ENCODE measurements at regions of chr3 and their contacts with region 1.

Region 1: GRCh38 chr3:126134219-126134975 is 46.0 kb downstream of the ALDH1L1 start:
- DNase-seq: peak; percentile 28 to 32
- ATAC-seq: peak; percentile 82 to 92; a peak in 5 of 6 replicates
- H3K4me3 ChIP-seq: no peak overlapping the region
- H3K27ac ChIP-seq: no peak overlapping the region
- H3K4me1 ChIP-seq: no peaks in the 10 kb centered on the region
- CTCF ChIP-seq: peak; percentile 66
- EP300 ChIP-seq: no peak
- POLR2A ChIP-seq: no peak
- RAD21 ChIP-seq: peak; percentile 84 to 86

Region 2: DNA sequence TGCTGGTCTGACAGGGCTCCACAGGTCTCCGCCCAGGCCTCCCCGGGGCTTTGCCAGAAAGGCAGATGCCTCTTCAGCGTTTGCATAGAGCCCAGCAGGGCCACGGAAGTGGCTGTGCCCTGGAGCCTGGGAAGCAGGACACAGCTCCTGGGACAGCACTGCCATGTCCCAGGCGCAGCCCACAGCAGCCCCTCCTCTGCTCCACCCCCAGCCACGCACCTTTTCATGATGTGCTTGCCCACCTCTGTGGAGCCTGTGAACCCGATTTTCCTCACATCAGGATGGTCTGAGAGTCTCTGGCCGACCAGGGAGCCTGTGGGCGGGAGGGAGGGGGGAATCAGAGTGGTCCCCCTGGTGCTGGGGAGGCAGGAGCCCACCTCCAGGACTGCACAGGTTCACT is 16.6 kb before region 1 on chr3:
- CTCF ChIA-PET with region 1: interaction called, 60 read pairs
- POLR2A ChIA-PET with region 1: no interaction called
- DNase-seq: no peak
- ATAC-seq: no peak
- H3K4me3 ChIP-seq: no peak overlapping the region
- H3K27ac ChIP-seq: no peak overlapping the region
- H3K4me1 ChIP-seq: no peaks in the 10 kb centered on the region
- CTCF ChIP-seq: no peak
- EP300 ChIP-seq: no peak
- POLR2A ChIP-seq: no peak
- RAD21 ChIP-seq: no peak

Region 3: GRCh38 chr3:126146525-126147146 is 12.2 kb after region 1 on chr3:
- CTCF ChIA-PET with region 1: interaction called, 23 read pairs
- POLR2A ChIA-PET with region 1: no interaction called
- DNase-seq: no peak
- ATAC-seq: no peak
- H3K4me3 ChIP-seq: no peak overlapping the region
- H3K27ac ChIP-seq: no peak overlapping the region
- H3K4me1 ChIP-seq: no peaks in the 10 kb centered on the region
- CTCF ChIP-seq: no peak
- EP300 ChIP-seq: no peak
- POLR2A ChIP-seq: no peak
- RAD21 ChIP-seq: no peak

Region 4: GRCh38 chr3:126212602-126213378 is 78.4 kb after region 1 on chr3:
- CTCF ChIA-PET with region 1: interaction called, 11 read pairs
- POLR2A ChIA-PET with region 1: interaction called, 3 read pairs
- DNase-seq: peak; percentile 21 to 51
- ATAC-seq: peak; percentile 86 to 91
- H3K4me3 ChIP-seq: peak overlapping the region; percentile 42
- H3K27ac ChIP-seq: peak overlapping the region; percentile 69 to 85
- H3K4me1 ChIP-seq: peaks cover 25% of the 10 kb centered on the region
- CTCF ChIP-seq: peak; percentile 47
- EP300 ChIP-seq: no peak
- POLR2A ChIP-seq: no peak
- RAD21 ChIP-seq: peak in 1 of 2 experiments; percentile 39; a peak in 1 of 5 replicates

Region 5: DNA sequence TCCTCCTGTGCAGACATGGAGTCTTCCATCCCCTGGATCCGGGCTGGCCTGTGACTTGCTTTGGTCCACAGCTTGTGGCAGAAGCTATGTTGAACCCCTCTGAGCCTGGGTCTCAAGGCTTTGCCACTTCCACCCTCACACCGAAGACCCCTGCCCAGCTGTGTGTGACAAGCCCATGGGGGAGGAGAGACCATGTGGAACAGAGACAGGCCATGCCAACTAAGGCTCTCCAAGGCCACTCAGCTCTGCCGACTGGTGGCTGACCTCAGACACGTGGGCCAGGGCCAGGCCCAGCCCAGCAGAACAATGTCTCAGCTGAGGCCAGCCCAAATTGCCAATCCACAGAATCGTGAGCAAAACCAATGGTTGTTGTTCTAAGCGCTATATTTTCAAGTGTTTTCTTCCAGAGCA is 243.9 kb after region 1 on chr3:
- CTCF ChIA-PET with region 1: interaction called, 15 read pairs
- POLR2A ChIA-PET with region 1: no interaction called
- DNase-seq: no peak
- ATAC-seq: no peak
- H3K4me3 ChIP-seq: no peak overlapping the region
- H3K27ac ChIP-seq: no peak overlapping the region
- H3K4me1 ChIP-seq: no peaks in the 10 kb centered on the region
- CTCF ChIP-seq: no peak
- EP300 ChIP-seq: no peak
- POLR2A ChIP-seq: no peak
- RAD21 ChIP-seq: no peak